ENCODE measurements at regions of chr3 and their contacts with region 1.

Region 1: DNA sequence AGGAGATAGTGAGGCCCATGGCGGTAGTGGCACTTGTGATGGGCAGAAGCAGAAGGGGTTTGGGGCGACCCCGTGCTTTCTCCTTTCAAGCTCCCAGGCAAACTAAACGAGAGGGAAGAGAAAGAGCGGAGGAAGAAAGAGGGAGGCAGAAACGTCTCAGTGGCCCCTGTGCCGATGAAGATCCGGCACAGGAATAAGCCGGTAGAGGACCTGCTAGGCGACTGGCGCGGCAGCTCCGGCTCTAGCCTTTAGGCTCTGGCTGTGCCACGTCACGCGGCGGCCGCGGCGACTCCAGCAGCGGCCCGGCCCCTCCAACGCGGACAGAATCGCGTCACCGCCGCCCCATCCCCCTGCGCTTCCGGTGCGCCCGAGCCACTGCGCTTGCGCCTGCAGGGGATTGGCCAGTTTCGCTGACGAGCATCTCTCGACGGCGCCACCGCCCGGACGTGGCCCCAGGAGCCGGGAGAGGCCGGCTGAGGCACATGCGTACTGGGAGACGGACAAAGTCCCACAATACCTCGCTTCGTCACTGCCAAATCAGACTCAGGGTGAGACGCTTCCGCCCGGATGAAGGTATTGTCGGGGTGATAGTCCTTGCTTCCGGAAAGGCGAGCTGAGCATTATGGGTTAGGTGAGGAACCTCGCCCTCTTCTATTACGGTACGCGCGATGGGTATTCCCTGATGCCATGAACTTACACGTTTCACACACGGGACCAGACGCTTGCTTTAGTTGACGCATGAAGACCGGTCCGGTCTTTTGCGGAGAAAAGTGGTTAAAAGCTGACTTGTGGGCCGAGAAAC is at the start of gene ARF4:
- DNase-seq: peak; percentile 96 to 99
- ATAC-seq: peak; percentile 94
- H3K4me3 ChIP-seq: peak within 1 kb of the TSS; percentile 84
- H3K27ac ChIP-seq: peak within 1 kb of the TSS; percentile 89 to 96
- H3K4me1 ChIP-seq: peaks cover 21% of the 10 kb centered on the region; the same call in 2 of the 3 replicates
- CTCF ChIP-seq: no peak; the same call in 2 of the 3 replicates
- EP300 ChIP-seq: no peak
- POLR2A ChIP-seq: peak; percentile 78
- RAD21 ChIP-seq: no peak
- polyA plus RNA-seq, gene ARF4: 222 and 262 TPM in 2 replicates

Region 2: GRCh38 chr3:57500506-57500905 is 96.8 kb before region 1 on chr3:
- CTCF ChIA-PET with region 1: no interaction called
- POLR2A ChIA-PET with region 1: no interaction called
- DNase-seq: no peak
- ATAC-seq: no peak
- H3K4me3 ChIP-seq: no peak overlapping the region
- H3K27ac ChIP-seq: no peak overlapping the region
- H3K4me1 ChIP-seq: no peaks in the 10 kb centered on the region
- CTCF ChIP-seq: no peak
- EP300 ChIP-seq: no peak
- POLR2A ChIP-seq: no peak
- RAD21 ChIP-seq: no peak

Region 3: DNA sequence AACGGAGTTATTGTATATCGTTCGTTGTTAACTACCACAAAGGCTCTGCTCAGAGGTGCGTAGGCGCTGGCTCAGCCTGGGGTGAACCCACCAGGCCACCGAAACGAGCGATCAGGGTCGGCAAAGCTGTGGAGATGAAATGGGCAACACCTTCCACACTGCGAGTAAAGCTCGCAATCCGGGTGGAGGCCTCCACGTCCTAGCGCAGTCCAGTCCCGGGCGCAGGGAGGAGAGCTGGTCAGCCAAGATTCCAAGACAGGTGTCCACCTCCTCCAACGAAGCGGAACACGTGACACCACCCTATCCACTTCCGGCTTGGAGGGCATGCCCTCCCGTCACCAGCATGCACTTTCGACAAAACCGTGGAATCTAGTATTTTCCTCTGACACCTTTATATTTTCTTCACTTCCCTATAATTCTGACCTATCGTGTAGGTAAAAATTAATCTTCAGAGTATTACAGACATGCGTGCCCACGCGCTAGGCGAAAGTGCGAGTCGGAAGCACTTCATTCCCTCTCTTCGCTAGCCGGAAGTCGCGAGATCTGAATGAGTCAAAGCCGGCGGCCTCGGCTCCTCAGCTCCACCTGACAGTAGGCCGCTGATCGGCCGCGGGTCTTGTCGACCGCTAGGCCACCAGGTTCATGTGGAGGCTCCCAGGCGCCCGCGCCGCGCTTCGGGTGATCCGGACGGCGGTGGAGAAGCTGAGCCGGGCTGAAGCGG is 41.4 kb before region 1 on chr3 and contains the start of gene PDE12:
- CTCF ChIA-PET with region 1: no interaction called
- POLR2A ChIA-PET with region 1: interaction called, 17 read pairs
- DNase-seq: peak; percentile 72 to 93
- ATAC-seq: peak; percentile 95 to 97
- H3K4me3 ChIP-seq: peak within 1 kb of the TSS; percentile 69
- H3K27ac ChIP-seq: peak within 1 kb of the TSS; percentile 82 to 87
- H3K4me1 ChIP-seq: peaks cover 13% of the 10 kb centered on the region; the same call in 2 of the 3 replicates
- CTCF ChIP-seq: no peak
- EP300 ChIP-seq: no peak
- POLR2A ChIP-seq: peak; percentile 51
- RAD21 ChIP-seq: no peak
- polyA plus RNA-seq, gene PDE12: 12.9 and 14.4 TPM in 2 replicates

Region 4: GRCh38 chr3:57586778-57587177 is 10.5 kb before region 1 on chr3:
- CTCF ChIA-PET with region 1: no interaction called
- POLR2A ChIA-PET with region 1: no interaction called
- DNase-seq: no peak
- ATAC-seq: no peak
- H3K4me3 ChIP-seq: no peak overlapping the region
- H3K27ac ChIP-seq: no peak overlapping the region
- H3K4me1 ChIP-seq: peaks cover 4% of the 10 kb centered on the region; the same call in 1 of the 3 replicates
- CTCF ChIP-seq: no peak
- EP300 ChIP-seq: no peak
- POLR2A ChIP-seq: no peak
- RAD21 ChIP-seq: no peak

Measured in A549 (cell line).